ENCODE measurements at regions of chr1 and their contacts with region 1.

Region 1: GRCh38 chr1:220300442-220301121 is 28.3 kb upstream of the RAB3GAP2 start:
- DNase-seq: peak; percentile 60
- H3K4me3 Mint-ChIP-seq: no peak overlapping the region
- H3K27ac Mint-ChIP-seq: peak overlapping the region; percentile 56
- H3K4me1 Mint-ChIP-seq: peaks cover 10% of the 10 kb centered on the region
- H3K27me3 Mint-ChIP-seq: no peaks in the 10 kb centered on the region
- CTCF ChIP-seq: no peak

Region 2: GRCh38 chr1:220370031-220370700 is 69.6 kb after region 1 on chr1:
- CTCF ChIA-PET with region 1: interaction called, 3 read pairs
- intact Hi-C with region 1: loop called (anchors 5 kb)
- DNase-seq: peak; percentile 48
- H3K4me3 Mint-ChIP-seq: no peak overlapping the region
- H3K27ac Mint-ChIP-seq: peak overlapping the region; percentile 31
- H3K4me1 Mint-ChIP-seq: peaks cover 43% of the 10 kb centered on the region
- H3K27me3 Mint-ChIP-seq: no peaks in the 10 kb centered on the region
- CTCF ChIP-seq: no peak

Region 3: GRCh38 chr1:221708987-221709386 is 1408.4 kb after region 1 on chr1:
- CTCF ChIA-PET with region 1: interaction called, 11 read pairs
- intact Hi-C with region 1: no loop called
- DNase-seq: peak; percentile 72
- H3K4me3 Mint-ChIP-seq: peak overlapping the region; percentile 31
- H3K27ac Mint-ChIP-seq: peak overlapping the region; percentile 93
- H3K4me1 Mint-ChIP-seq: peaks cover 57% of the 10 kb centered on the region
- H3K27me3 Mint-ChIP-seq: no peaks in the 10 kb centered on the region
- CTCF ChIP-seq: no peak